Transverse colon (tissue), 4 donors: ENCODE measurements at regions of chr15 and their contacts with region 1.

Region 1: DNA sequence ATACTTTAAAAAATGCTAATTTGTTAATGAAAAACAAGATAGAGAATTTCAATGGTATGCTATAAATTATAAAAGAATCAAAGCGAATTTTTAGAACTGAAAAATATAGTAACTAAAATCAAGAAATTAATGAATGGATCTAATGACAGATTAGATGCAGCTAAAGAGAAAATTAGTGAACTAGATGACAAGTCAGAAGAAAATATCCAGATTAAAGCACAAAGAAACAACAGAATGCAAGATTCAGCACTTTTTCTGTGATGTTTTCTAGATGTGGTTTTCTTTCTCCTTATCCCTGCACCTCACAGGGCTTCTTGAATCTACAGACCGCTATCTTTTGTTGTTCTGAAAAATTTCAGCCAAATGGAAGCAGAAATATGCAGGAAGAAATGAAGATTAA is 54.4 kb downstream of the INO80 start:
- DNase-seq: no peak
- H3K4me3 ChIP-seq: no peak overlapping the region
- H3K27ac ChIP-seq: no peak overlapping the region
- H3K4me1 ChIP-seq: no peaks in the 10 kb centered on the region
- H3K27me3 ChIP-seq: no peaks in the 10 kb centered on the region
- CTCF ChIP-seq: no peak
- EP300 ChIP-seq: no peak
- POLR2A ChIP-seq: no peak

Region 2: DNA sequence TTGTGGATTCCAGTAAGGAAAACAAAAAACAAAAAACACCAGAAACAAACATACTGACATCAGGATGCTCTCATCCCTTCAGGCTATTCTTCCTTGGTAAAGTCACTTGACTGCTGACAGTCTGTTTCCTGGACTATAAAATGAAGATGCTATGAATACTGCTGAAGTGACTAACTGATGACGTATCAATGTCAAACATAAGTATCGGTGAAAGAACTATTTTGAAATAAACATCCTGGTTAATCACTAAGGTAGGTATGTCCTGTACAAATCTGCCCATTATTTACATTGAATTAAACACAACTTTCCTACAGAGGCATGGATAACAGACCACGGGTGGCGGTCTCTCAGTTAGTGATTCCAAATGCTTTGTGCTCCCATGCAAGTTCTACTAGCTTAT is 62.5 kb before region 1 on chr15:
- in situ Hi-C with region 1: no loop called
- intact Hi-C with region 1: no loop called
- DNase-seq: no peak
- H3K4me3 ChIP-seq: no peak overlapping the region
- H3K27ac ChIP-seq: no peak overlapping the region
- H3K4me1 ChIP-seq: peaks cover 3 to 15% (median 8%) of the 10 kb centered on the region in 4 donors
- H3K27me3 ChIP-seq: no peaks in the 10 kb centered on the region
- CTCF ChIP-seq: no peak
- EP300 ChIP-seq: no peak
- POLR2A ChIP-seq: no peak

Region 3: DNA sequence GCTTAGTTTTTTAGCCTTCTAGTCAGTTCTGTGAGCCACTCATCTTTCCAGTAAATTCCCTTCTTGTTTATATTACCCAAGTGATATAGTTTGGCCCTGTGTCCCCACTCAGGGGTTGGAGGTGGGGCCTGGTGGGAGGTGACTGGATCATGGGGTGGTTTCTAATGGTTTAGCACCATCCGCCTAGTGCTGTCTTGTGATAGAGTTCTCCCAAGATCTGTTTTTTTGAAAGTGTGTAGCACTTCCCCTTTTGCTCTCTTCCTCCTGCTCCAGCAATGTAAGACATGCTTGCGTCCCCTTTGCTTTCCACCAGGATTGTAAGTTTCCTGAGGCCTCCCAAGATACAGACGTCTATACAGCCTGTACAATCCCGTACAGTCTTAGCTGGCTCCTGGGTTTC is 108.1 kb after region 1 on chr15:
- in situ Hi-C with region 1: no loop called
- intact Hi-C with region 1: loop called (anchors 10 kb)
- DNase-seq: no peak
- H3K4me3 ChIP-seq: no peak overlapping the region
- H3K27ac ChIP-seq: no peak overlapping the region
- H3K4me1 ChIP-seq: no peaks in the 10 kb centered on the region
- H3K27me3 ChIP-seq: no peaks in the 10 kb centered on the region
- CTCF ChIP-seq: no peak
- EP300 ChIP-seq: no peak
- POLR2A ChIP-seq: no peak